Activated CD4-positive, alpha-beta T cell treated with anti-CD3 and anti-CD28 coated beads, Interleukin-2, amount 10 ng/mL, durations not matched to agents 24 days and 14 days (primary cell): ENCODE measurements at regions of chr3 and their contacts with region 1.

Region 1: GRCh38 chr3:41961750-41962679 is at the start of gene ULK4:
- DNase-seq: peak; percentile 98
- H3K4me3 Mint-ChIP-seq: peak within 1 kb of the TSS; percentile 92
- H3K27ac Mint-ChIP-seq: peak within 1 kb of the TSS; percentile 94
- H3K4me1 Mint-ChIP-seq: peaks cover 9% of the 10 kb centered on the region
- H3K27me3 Mint-ChIP-seq: peaks cover 1% of the 10 kb centered on the region
- total RNA-seq, gene ULK4: 6.3 and 10.2 TPM in 2 replicates

Region 2: DNA sequence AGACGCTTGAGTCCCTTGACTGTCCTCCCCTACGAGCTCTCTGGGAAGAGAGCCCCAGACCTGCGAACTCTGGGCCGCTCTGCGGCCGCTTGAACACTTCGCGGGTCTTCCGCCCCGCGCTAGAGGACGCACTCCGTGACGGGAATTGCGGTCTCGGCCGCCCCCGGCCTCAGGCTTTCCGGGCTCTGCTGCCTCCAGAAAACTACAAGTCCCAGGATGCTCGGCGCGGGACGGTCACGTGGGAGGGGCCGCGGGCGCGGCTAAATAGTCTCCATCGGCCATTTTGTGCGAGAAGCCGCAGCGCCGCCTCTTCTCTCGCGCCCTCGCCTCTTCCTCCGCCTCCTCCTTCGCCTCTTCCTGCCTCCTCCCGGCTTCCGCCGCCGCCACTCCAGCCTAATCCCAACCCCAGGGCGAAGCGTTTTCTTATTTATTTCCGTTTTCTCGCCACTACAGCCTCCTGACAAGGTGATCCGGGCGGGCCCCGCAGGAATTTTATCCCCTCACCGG is 1652.5 kb before region 1 on chr3 and contains the start of gene EIF1B:
- intact Hi-C with region 1: loop called (anchors 1 kb)
- DNase-seq: peak; percentile 100
- H3K4me3 Mint-ChIP-seq: peak within 1 kb of the TSS; percentile 100
- H3K27ac Mint-ChIP-seq: peak within 1 kb of the TSS; percentile 99
- H3K4me1 Mint-ChIP-seq: peaks cover 17% of the 10 kb centered on the region
- H3K27me3 Mint-ChIP-seq: no peaks in the 10 kb centered on the region
- total RNA-seq, gene EIF1B: 46.1 and 47.7 TPM in 2 replicates

Region 3: DNA sequence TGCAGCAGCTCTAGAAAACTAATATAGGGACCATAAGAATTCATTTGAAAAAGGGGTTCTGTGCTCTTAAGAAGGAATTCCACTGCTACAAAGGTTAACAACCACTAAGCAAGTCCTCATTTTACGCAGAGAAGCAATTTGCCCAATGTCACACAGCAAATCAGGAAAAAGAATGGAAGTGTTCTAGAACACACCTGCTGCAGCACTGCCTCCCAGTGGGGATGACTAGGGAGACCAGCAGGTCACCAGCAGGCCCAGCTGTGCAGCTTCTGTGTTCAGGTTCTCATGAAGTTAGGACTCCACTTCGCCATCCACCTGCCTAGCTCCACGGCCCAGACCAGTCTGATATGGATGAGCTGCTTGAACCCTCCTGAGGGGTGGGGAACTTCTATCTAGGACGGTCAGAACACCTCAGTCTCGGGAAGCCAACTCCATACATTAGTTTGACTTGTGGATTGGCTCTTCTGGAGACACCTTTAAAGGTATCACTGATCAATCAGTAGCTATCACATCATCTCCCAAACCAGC is 1125.3 kb after region 1 on chr3:
- intact Hi-C with region 1: no loop called
- DNase-seq: no peak
- H3K4me3 Mint-ChIP-seq: no peak overlapping the region
- H3K27ac Mint-ChIP-seq: no peak overlapping the region
- H3K4me1 Mint-ChIP-seq: peaks cover 6% of the 10 kb centered on the region
- H3K27me3 Mint-ChIP-seq: no peaks in the 10 kb centered on the region